ENCODE measurements at regions of chr12 and their contacts with region 1.

Region 1: DNA sequence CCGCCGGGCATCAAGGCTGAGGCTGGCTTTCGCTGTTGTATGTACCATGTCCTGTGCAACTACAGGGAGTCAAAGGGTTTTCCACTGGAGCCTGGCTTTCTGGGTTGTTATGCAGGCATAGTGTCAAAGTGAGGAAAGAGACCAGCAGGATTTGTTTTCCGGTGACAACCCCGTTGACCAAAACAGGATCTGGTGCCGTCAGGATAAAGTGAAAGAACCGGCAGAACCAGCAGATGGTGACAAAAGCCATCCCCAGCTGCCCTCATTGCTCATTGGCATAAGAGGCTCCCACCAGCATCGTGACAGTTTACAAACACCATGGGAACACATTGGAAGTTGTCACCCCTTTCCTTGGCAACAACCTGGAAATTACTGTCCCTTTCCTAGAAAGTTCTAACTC is 80.8 kb downstream of the SLC15A4 start:
- DNase-seq: no peak
- ATAC-seq: no peak
- H3K4me3 ChIP-seq: no peak overlapping the region
- H3K4me3 Mint-ChIP-seq: peak overlapping the region; percentile 28
- H3K27ac ChIP-seq: peak overlapping the region; percentile 89
- H3K27ac Mint-ChIP-seq: peak overlapping the region; percentile 91 to 93
- H3K4me1 ChIP-seq: peaks cover 49% of the 10 kb centered on the region
- H3K4me1 Mint-ChIP-seq: peaks cover 78% of the 10 kb centered on the region in 2 donors
- H3K27me3 ChIP-seq: no peaks in the 10 kb centered on the region
- H3K27me3 Mint-ChIP-seq: no peaks in the 10 kb centered on the region
- CTCF ChIP-seq: no peak

Region 2: DNA sequence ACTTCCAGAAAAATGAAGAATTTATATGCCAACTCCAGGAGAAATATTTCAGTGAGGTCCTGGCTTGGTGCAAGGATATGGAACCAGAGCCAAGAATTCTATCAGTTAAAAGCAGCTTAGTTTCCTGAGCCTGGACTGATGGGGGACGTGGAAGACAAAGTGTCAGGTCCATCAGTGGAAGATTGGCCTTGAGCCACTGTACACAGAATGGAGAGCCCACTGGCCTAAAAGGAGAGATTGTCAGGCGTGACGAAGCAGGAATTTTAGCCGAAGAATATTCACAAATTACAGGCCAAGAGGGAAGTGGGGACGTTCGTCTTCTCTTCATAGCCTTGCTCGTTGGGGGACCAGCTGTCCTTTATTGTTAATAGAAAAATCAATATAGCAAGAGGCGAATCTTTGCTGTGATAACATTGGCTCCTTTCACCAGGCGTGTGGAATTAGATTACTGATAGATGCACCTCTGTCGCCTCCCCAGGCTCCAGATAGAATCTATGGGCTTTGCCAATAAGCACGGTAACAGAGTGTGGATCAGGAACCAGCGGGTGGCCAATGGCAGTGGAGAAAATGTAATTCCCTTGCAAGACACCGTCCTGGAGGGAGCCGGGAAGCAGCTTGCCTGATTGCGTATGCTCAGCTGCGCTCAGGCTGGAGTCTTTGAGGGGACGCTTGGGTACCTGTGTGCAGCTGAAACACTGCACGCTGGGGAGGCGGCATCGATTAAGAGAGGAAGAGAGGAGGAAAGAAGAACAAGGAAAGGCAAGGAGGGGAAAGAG is 419.7 kb before region 1 on chr12:
- intact Hi-C with region 1: no loop called
- DNase-seq: no peak
- ATAC-seq: no peak
- H3K4me3 ChIP-seq: no peak overlapping the region
- H3K4me3 Mint-ChIP-seq: no peak overlapping the region
- H3K27ac ChIP-seq: no peak overlapping the region
- H3K27ac Mint-ChIP-seq: no peak overlapping the region
- H3K4me1 ChIP-seq: no peaks in the 10 kb centered on the region
- H3K4me1 Mint-ChIP-seq: no peaks in the 10 kb centered on the region
- H3K27me3 ChIP-seq: no peaks in the 10 kb centered on the region
- H3K27me3 Mint-ChIP-seq: peaks cover 5 to 11% of the 10 kb centered on the region in 2 donors
- CTCF ChIP-seq: no peak

Region 3: GRCh38 chr12:128564956-128565355 is 178.0 kb before region 1 on chr12:
- intact Hi-C with region 1: loop called (anchors 10 kb)
- DNase-seq: no peak
- ATAC-seq: no peak
- H3K4me3 ChIP-seq: no peak overlapping the region
- H3K4me3 Mint-ChIP-seq: no peak overlapping the region
- H3K27ac ChIP-seq: no peak overlapping the region
- H3K27ac Mint-ChIP-seq: no peak overlapping the region
- H3K4me1 ChIP-seq: no peaks in the 10 kb centered on the region
- H3K4me1 Mint-ChIP-seq: peaks cover 4 to 14% of the 10 kb centered on the region in 2 donors
- H3K27me3 ChIP-seq: no peaks in the 10 kb centered on the region
- H3K27me3 Mint-ChIP-seq: peaks cover 13 to 34% of the 10 kb centered on the region in 2 donors
- CTCF ChIP-seq: no peak

Region 4: GRCh38 chr12:128690641-128691040 is 52.4 kb before region 1 on chr12:
- intact Hi-C with region 1: loop called (anchors 10 kb)
- DNase-seq: no peak
- ATAC-seq: no peak
- H3K4me3 ChIP-seq: no peak overlapping the region
- H3K4me3 Mint-ChIP-seq: no peak overlapping the region
- H3K27ac ChIP-seq: no peak overlapping the region
- H3K27ac Mint-ChIP-seq: no peak overlapping the region
- H3K4me1 ChIP-seq: peaks cover 21% of the 10 kb centered on the region
- H3K4me1 Mint-ChIP-seq: peaks cover 0 to 9% of the 10 kb centered on the region in 2 donors
- H3K27me3 ChIP-seq: no peaks in the 10 kb centered on the region
- H3K27me3 Mint-ChIP-seq: no peaks in the 10 kb centered on the region
- CTCF ChIP-seq: no peak

Region 5: DNA sequence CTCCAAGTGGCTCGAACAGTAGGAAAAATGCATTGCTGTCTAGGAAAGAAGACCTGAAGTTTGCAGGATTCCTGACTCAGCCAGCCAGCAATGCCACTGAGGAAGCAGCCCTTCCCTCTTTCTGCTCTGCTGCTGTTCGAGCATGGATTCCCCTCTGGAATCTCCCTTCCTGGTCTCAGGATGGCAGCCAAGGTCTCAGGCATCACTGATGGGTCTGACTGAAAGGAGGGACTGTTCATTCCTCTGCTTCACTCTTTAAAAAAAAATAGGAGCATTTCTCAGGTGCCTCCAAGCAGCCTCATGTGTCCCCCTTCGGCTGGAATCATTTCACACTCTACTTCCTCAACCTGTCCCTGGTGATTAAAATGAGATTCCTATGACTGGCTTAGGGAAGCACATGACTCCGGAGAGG is 18.4 kb after region 1 on chr12:
- intact Hi-C with region 1: loop called (anchors 2 kb)
- DNase-seq: no peak
- ATAC-seq: no peak
- H3K4me3 ChIP-seq: no peak overlapping the region
- H3K4me3 Mint-ChIP-seq: no peak overlapping the region
- H3K27ac ChIP-seq: no peak overlapping the region
- H3K27ac Mint-ChIP-seq: no peak overlapping the region
- H3K4me1 ChIP-seq: peaks cover 17% of the 10 kb centered on the region
- H3K4me1 Mint-ChIP-seq: peaks cover 26 to 41% of the 10 kb centered on the region in 2 donors
- H3K27me3 ChIP-seq: no peaks in the 10 kb centered on the region
- H3K27me3 Mint-ChIP-seq: no peaks in the 10 kb centered on the region
- CTCF ChIP-seq: no peak

Region 6: DNA sequence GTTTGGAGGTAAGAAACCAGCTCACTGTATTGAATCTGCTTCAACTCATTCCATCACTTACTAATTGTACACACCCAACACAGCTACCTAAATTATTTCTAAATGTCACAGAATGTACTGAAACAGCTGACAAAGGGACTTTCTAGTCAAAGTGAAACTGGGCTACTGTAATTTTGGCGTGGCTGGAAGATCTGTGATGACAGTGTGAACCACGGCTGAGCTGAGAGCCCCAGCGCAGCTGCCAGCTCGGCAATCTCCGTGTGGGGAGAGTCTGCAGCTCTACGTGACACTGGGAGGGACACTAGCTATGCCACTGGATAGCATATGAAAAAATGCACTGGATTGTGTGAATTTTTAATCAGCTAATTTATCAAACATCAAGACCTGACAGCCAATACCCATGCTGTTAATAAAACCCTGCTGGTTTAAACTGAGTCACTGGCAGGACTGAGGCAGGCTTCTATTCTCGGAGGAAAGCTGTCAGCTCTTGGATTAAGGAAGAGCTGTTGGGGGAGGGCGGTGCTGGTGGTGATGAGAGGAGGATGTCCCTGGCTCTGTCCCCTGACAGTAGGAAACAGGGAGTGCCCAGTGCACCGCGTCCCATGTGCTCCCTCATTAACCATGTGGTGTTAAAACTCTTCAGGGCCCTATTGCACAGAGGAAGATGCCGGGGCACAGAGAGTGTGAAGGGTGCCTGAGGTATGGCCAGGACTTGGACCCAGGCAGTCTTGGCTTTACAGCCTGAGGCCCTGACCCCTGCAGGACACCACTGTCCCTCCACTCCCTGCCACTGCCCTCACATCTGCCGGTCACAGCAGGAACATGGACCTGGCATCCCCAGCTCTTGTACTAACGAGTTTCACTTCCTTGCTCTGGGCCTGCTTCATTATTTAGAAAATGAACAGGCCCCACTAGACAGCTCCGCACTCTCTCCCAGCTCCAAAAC is 67.5 kb after region 1 on chr12:
- intact Hi-C with region 1: loop called (anchors 5 kb)
- DNase-seq: peak; percentile 70 to 73
- ATAC-seq: peak; percentile 64 to 84 (median 68)
- H3K4me3 ChIP-seq: peak overlapping the region; percentile 2
- H3K4me3 Mint-ChIP-seq: peak overlapping the region; percentile 94
- H3K27ac ChIP-seq: peak overlapping the region; percentile 97
- H3K27ac Mint-ChIP-seq: peak overlapping the region; percentile 99
- H3K4me1 ChIP-seq: peaks cover 51% of the 10 kb centered on the region
- H3K4me1 Mint-ChIP-seq: peaks cover 63 to 65% of the 10 kb centered on the region in 2 donors
- H3K27me3 ChIP-seq: no peaks in the 10 kb centered on the region
- H3K27me3 Mint-ChIP-seq: no peaks in the 10 kb centered on the region
- CTCF ChIP-seq: no peak

Region 7: GRCh38 chr12:128914908-128915563 is 172.0 kb after region 1 on chr12:
- intact Hi-C with region 1: loop called (anchors 10 kb)
- DNase-seq: peak; percentile 20 to 65
- ATAC-seq: peak; percentile 69 to 91 (median 90)
- H3K4me3 ChIP-seq: no peak overlapping the region
- H3K4me3 Mint-ChIP-seq: no peak overlapping the region
- H3K27ac ChIP-seq: no peak overlapping the region
- H3K27ac Mint-ChIP-seq: peak overlapping the region in 1 of 2 donors; percentile 64
- H3K4me1 ChIP-seq: peaks cover 12% of the 10 kb centered on the region
- H3K4me1 Mint-ChIP-seq: peaks cover 0 to 6% of the 10 kb centered on the region in 2 donors
- H3K27me3 ChIP-seq: no peaks in the 10 kb centered on the region
- H3K27me3 Mint-ChIP-seq: peaks cover 0 to 2% of the 10 kb centered on the region in 2 donors
- CTCF ChIP-seq: no peak